AG04450 (cell line): ENCODE measurements at regions of chr10 and their contacts with region 1.

Region 1: DNA sequence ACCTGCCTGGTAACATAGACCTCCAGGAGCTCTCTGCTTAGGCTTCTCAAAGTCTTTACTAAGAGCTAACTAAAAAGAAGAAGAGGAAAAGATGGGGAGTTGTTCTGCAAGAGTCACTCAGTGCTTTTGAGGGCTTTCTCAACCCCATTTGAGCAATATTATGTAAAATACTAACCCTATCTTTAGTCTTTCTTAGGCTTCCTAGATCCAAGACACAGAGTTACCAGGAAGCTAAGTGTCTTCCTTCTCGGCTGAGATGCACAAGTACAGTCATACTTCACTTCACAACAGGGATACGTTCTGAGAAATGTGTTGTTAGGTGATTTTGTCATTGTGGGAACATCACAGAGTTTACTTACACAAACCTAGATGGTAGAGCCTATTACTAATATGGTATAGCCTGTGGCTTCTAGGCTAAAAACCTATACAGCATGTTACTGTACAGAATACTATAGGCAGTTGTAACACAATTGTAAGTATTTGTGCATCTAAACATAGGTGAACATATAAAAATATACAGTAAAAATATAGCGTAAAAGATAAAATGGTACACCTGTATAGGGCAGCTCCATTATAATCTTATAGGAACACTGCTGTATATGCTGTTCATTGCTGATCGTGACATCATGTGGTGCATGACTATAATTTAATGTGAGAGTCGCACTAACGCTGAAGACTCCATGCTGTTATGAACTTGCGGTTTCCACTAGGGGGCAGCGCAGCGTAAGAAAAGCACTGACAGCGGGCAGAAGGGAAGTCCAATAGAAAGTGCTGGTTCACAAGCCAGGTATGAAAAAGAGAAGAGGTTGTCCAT is 16.3 kb downstream of the ANKRD22 start:
- DNase-seq: peak; percentile 75
- H3K4me3 ChIP-seq: no peak overlapping the region
- H3K27ac ChIP-seq: no peak overlapping the region
- H3K27me3 ChIP-seq: no peaks in the 10 kb centered on the region
- CTCF ChIP-seq: peak; percentile 90

Region 2: DNA sequence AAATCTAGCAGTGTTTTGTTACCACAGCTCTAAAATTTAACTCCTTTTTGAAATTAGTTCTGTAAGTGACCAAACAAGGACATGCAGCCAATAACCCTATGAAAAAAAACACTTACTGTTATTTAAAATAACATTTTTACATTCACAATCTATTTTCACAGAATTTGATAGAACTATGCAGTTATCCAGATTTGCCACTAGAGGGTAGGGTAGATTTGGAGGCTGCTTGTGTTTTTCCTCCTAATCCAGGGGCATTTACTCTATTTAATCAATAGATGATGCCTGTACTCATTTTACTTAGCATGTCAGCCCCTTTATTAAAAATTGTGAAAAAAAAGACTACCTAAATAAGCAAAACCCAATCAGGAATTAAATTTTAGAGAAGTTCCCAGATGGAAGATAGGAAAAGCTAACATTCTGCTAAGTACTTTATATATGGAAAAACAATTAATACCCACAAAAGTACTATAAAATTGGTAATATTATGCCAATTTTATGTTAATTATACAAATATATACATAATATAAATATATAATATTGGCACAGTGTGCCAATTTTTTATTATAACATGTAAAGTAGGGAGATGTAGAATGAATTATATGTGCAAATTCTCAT is 147.3 kb before region 1 on chr10:
- CTCF ChIA-PET with region 1: interaction called, 17 read pairs
- POLR2A ChIA-PET with region 1: no interaction called
- DNase-seq: no peak
- H3K4me3 ChIP-seq: no peak overlapping the region
- H3K27ac ChIP-seq: no peak overlapping the region
- H3K27me3 ChIP-seq: no peaks in the 10 kb centered on the region
- CTCF ChIP-seq: peak; percentile 85

Region 3: GRCh38 chr10:88857831-88858230 is 22.5 kb after region 1 on chr10:
- CTCF ChIA-PET with region 1: interaction called, 19 read pairs
- POLR2A ChIA-PET with region 1: no interaction called
- DNase-seq: no peak
- H3K4me3 ChIP-seq: no peak overlapping the region
- H3K27ac ChIP-seq: no peak overlapping the region
- H3K27me3 ChIP-seq: no peaks in the 10 kb centered on the region
- CTCF ChIP-seq: no peak

Region 4: GRCh38 chr10:88880282-88881076 is 45.2 kb after region 1 on chr10:
- CTCF ChIA-PET with region 1: interaction called, 12 read pairs
- POLR2A ChIA-PET with region 1: no interaction called
- DNase-seq: no peak
- H3K4me3 ChIP-seq: peak overlapping the region; percentile 85
- H3K27ac ChIP-seq: peak overlapping the region; percentile 88
- H3K27me3 ChIP-seq: no peaks in the 10 kb centered on the region
- CTCF ChIP-seq: 0 out of 2 replicates have a peak, but pooled peaks have one; percentile 26

Region 5: DNA sequence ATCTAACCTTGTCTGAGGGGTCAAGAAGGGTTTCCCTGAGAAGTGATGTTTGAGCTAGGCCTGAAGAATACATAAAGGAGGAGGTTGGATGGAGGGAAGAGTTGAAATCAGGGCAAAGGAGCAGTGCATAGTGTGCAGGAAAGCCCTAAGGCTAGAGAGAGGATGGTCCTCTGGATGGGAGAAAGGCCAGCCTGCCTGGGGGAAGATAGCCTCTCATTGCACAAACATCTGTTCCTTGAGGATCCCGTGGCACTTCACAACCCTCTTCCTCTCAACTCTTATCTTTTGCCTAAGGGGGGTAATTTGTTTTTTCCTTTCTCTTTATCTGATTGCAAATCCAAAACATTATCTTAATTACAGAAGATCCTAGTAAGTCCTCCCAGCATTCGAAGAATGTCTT is 80.5 kb after region 1 on chr10:
- CTCF ChIA-PET with region 1: interaction called, 11 read pairs
- POLR2A ChIA-PET with region 1: no interaction called
- DNase-seq: no peak
- H3K4me3 ChIP-seq: no peak overlapping the region
- H3K27ac ChIP-seq: no peak overlapping the region
- H3K27me3 ChIP-seq: no peaks in the 10 kb centered on the region
- CTCF ChIP-seq: no peak

Region 6: GRCh38 chr10:88944813-88945212 is 109.5 kb after region 1 on chr10:
- CTCF ChIA-PET with region 1: interaction called, 42 read pairs
- POLR2A ChIA-PET with region 1: no interaction called
- DNase-seq: no peak
- H3K4me3 ChIP-seq: no peak overlapping the region
- H3K27ac ChIP-seq: no peak overlapping the region
- H3K27me3 ChIP-seq: no peaks in the 10 kb centered on the region
- CTCF ChIP-seq: no peak

Region 7: DNA sequence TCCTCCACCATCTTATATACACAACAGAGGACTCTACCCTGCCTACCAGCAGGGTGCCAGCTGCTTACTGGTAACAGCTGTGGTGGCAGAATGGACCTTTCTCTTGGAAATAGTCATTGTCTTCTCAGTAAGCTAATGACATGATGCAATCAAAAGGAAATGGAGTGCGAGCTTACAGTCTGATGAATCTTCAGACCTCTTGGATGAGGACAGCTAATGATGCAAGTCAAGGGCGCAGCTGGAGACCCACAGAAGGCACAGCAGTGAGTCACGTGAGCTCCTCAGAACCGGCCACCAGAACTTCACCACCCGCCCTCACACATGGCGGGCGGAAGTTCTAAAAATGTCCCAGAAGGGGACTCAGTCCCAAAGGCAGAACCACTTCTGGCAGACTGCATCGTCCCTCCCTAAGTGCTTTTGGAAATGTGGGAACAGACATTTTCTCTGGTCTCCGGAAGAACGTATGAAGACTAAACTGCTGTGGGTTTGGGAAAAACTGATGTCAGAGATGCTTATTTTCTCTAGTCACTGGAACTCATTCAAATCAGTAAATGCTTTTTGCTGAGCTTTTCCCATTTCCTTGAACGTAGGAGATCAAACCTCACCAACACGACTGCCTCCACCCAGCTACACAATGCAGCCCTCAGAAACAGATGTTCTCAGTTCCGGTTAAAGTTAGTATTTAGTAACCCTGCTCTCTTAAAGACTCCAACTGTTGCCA is 251.7 kb after region 1 on chr10:
- CTCF ChIA-PET with region 1: no interaction called
- POLR2A ChIA-PET with region 1: no interaction called
- DNase-seq: peak; percentile 43
- H3K4me3 ChIP-seq: no peak overlapping the region
- H3K27ac ChIP-seq: peak overlapping the region; percentile 43
- H3K27me3 ChIP-seq: no peaks in the 10 kb centered on the region
- CTCF ChIP-seq: no peak